Transverse colon (tissue), 4 donors: ENCODE measurements at regions of chr18 and their contacts with region 1.

Region 1: DNA sequence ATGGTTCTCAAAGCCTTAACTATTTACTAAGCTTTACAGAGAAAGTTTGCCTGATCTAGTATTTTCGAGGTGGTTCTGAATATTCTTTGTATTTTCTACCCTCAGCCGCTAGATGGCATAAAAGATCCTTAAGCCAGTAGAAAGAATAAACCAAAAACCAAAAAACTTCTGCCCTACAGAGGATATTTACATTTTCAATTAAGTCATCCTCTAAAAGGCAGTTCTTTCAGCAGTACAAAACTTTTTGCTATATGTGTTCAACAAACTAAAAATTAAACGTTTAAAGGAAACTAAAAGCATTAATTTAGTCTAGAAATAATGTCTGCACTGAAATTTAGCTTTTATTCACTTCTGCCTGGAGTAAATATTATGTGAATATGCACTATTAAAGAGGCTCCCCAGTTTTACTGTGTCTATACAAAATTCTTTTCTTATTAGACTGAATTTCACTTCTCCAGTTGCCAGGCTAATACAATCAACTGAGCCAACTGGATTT is 297.5 kb downstream of the PIEZO2 start:
- DNase-seq: no peak
- H3K4me3 ChIP-seq: no peak overlapping the region
- H3K27ac ChIP-seq: no peak overlapping the region
- H3K4me1 ChIP-seq: peaks cover 0 to 6% (median 0%) of the 10 kb centered on the region in 4 donors
- H3K27me3 ChIP-seq: no peaks in the 10 kb centered on the region
- CTCF ChIP-seq: peak; percentile 52 to 68 (median 61)
- EP300 ChIP-seq: no peak
- POLR2A ChIP-seq: no peak

Region 2: GRCh38 chr18:11034884-11035283 is 183.0 kb after region 1 on chr18:
- in situ Hi-C with region 1: loop called in 3 of 4 experiments (anchors 5 to 25 kb)
- intact Hi-C with region 1: loop called (anchors 5 kb)
- DNase-seq: no peak
- H3K4me3 ChIP-seq: no peak overlapping the region
- H3K27ac ChIP-seq: no peak overlapping the region
- H3K4me1 ChIP-seq: peaks cover 0 to 2% (median 0%) of the 10 kb centered on the region in 4 donors
- H3K27me3 ChIP-seq: no peaks in the 10 kb centered on the region
- CTCF ChIP-seq: no peak
- EP300 ChIP-seq: no peak
- POLR2A ChIP-seq: no peak

Region 3: GRCh38 chr18:11040823-11041656 is 189.2 kb after region 1 on chr18:
- in situ Hi-C with region 1: loop called in 3 of 4 experiments (anchors 5 to 25 kb)
- intact Hi-C with region 1: loop called (anchors 5 kb)
- DNase-seq: peak; percentile 26
- H3K4me3 ChIP-seq: no peak overlapping the region
- H3K27ac ChIP-seq: no peak overlapping the region
- H3K4me1 ChIP-seq: no peaks in the 10 kb centered on the region
- H3K27me3 ChIP-seq: no peaks in the 10 kb centered on the region
- CTCF ChIP-seq: peak; percentile 47 to 68 (median 60)
- EP300 ChIP-seq: no peak
- POLR2A ChIP-seq: no peak

Region 4: DNA sequence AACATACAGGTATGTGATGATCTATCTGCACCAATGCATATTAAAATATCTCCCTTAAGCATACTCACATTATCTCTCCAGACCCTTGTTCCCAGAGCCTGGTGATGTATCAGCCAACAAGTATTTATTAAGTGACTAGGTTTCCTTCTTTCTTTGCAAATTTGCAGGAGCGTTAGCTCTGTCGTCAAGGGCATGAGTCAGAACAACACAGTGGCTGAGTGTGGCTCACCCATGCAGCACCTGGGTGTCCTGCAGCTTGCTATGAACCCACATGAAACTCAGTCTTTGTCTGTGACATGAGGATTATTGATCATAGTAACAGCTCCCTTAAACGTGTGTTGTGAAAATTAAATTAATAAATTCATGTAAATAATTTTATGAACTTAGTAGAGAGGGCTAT is 200.9 kb after region 1 on chr18:
- in situ Hi-C with region 1: loop called in 2 of 4 experiments (anchors 25 kb)
- intact Hi-C with region 1: no loop called
- DNase-seq: no peak
- H3K4me3 ChIP-seq: no peak overlapping the region
- H3K27ac ChIP-seq: no peak overlapping the region
- H3K4me1 ChIP-seq: no peaks in the 10 kb centered on the region
- H3K27me3 ChIP-seq: no peaks in the 10 kb centered on the region
- CTCF ChIP-seq: no peak
- EP300 ChIP-seq: no peak
- POLR2A ChIP-seq: no peak

Region 5: DNA sequence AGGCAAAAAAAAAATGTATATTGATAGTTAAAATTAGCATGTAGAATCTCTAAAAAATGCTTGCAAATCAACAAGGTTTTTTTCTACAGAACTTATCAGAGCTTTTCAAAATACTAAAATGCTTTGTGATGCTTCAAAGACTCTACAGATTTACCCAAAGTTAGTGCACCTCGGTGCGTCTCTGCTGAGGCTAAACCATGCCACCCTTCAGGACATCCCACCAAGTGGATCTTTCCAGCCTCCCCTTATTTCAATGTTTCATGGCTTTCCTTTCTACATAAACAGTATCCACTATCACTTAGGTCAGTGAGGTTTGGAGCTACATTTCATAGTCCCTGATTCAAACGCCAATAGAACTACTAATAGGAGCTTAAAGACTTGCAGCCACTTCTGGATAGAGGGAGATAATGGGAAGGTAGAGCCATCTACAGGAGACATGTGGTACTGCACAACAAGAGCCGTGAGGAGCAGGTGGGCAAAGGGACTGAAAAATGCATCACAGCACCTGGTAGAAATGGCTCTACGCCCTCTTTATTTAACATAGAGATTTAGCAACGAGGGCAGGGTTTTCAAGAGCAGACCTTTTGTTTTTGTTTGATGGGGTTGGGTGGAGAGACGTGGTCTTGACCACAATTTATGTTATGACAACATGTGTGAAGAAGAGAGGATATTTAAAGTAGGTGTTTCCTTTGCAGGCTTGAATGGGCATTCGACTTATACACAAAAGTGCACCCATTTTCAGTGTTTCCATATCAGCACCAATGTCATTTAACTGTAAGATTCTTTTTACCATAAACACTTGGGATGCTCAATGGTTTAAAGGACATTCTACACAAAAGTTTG is 701.4 kb after region 1 on chr18:
- in situ Hi-C with region 1: loop called in 2 of 4 experiments (anchors 25 kb)
- intact Hi-C with region 1: no loop called
- DNase-seq: no peak
- H3K4me3 ChIP-seq: no peak overlapping the region
- H3K27ac ChIP-seq: no peak overlapping the region
- H3K4me1 ChIP-seq: no peaks in the 10 kb centered on the region
- H3K27me3 ChIP-seq: no peaks in the 10 kb centered on the region
- CTCF ChIP-seq: peak; percentile 60 to 84 (median 77)
- EP300 ChIP-seq: no peak
- POLR2A ChIP-seq: no peak